Prostate gland (tissue), 2 donors: ENCODE measurements at regions of chr15 and their contacts with region 1.

Region 1: DNA sequence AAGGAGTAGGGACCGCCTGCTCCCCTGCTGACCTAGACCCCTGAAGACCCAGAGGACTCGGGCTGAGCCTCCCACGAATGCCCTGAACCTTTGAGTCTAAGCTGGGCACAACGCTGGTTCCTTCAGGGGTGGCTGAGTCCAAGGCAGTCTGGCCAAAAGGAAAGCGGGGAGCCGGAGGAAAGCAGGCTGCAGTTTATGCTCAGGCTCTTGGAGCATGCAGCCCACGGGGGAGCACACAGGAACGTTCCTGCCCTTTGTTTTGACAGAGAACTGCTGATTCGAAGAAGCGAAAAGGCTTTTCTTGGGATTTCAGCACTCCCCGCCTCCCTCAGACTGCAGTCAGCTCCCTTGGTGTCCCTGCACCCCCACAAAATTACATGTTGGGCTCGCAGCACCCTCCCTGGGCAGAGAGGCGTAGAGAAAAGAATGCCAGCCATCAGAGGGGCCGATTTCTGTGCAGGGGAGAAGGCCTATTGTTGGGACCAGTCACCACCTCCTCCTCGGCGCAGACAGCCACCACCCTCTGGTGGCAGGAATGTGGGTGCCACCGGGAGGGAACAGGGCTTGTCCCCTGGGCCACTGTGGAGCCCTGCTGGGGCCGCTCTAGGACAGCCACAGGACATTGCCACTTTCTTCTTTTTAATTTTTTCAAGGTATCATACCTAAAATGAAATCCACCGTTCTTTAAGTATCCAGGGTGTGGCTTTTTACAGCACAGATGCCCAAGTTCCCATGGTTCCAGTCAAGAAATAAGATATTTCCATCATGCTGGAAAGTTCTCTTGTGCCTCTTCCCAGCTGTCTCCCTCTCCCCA is 72.2 kb downstream of the SMAD6 start:
- DNase-seq: peak; percentile 84
- H3K4me3 ChIP-seq: no peak overlapping the region
- H3K27ac ChIP-seq: peak overlapping the region; percentile 60 to 77
- H3K4me1 ChIP-seq: peaks cover 16% of the 10 kb centered on the region
- H3K27me3 ChIP-seq: no peaks in the 10 kb centered on the region
- CTCF ChIP-seq: peak; percentile 80 to 99 (median 96)
- POLR2A ChIP-seq: no peak

Region 2: DNA sequence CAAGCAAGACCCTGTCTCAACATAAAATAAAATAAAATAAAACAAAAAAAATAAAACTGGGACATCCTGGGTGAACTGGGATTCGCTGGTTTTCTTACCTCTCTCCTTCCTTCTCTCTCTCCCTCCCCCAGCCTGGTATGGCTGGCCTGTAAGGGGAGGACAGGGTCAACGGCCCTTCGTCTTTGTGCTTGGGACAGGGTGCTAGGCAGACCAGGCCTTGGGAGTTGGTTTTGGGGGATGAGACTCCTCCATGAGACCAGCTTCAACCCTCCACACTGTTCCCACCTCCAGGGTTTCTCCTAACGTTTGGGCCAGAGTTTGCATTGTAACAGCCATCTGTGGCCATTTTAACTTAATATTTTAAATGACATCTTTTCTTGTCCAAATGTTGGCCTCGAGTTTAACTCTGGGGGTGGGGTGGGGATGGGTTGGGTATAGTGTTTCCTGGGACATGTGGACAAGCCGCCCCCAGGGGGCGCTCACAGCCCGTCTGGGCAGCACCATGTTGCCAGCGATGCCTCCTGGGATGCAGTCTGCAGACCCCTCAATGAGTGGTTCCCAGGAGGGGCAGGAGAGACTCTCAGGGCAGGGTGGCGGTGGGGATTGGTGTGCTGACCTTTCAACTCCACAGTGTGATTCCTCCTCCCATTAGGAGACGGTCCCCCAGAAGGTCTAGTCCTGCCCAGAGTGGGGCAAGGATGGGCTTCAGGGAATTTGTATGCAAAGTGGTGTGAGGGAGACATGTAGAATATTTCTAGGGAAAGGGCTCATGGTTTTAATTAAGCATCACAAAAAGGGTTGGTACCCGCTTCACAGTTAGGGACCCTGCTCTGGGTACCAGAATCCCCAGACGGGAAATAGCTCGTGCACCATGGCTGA is 170.7 kb before region 1 on chr15:
- intact Hi-C with region 1: loop called (anchors 5 kb)
- DNase-seq: peak; percentile 42
- H3K4me3 ChIP-seq: no peak overlapping the region
- H3K27ac ChIP-seq: no peak overlapping the region
- H3K4me1 ChIP-seq: no peaks in the 10 kb centered on the region
- H3K27me3 ChIP-seq: no peaks in the 10 kb centered on the region
- CTCF ChIP-seq: peak; percentile 86 to 96 (median 90)
- POLR2A ChIP-seq: no peak

Region 3: DNA sequence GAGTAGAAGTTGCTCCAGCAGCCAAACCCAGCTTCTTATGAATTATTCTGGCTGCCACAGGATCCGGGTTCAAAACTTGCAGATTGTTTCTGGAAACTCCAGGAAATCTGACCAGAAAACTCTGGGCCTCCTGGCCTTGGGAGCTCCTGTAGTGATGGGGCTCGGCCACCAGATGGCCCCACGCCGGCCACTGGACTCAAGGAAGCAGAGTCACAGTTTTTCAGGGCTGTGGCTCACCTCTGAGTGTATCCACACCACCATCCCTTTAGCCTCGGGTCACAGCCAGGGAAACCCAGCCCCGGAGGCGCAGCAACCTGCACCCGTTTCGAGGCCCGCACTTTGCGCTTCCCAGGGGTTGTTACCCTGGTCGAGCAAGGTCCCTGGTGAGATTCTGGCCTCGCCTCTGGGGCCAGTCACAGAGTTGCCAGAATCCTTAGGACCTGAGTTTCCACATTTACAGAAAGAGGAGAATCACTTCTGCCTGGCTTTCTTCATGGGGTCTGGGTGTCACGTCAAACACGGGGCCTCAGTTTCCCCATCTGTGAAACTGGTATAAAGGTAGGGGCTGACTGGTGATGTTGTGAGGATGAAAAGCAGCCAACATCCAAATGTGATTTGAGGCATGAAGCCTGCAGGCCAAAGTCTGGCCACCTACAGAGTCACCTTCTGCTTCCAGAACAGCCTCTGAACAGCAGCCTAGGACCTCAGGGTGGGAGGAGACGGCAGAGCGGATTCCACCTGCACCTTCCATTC is 154.9 kb before region 1 on chr15:
- intact Hi-C with region 1: loop called (anchors 5 kb)
- DNase-seq: peak; percentile 68
- H3K4me3 ChIP-seq: no peak overlapping the region
- H3K27ac ChIP-seq: peak overlapping the region; percentile 24 to 39
- H3K4me1 ChIP-seq: peaks cover 13% of the 10 kb centered on the region
- H3K27me3 ChIP-seq: no peaks in the 10 kb centered on the region
- CTCF ChIP-seq: peak; percentile 64 to 90 (median 82)
- POLR2A ChIP-seq: no peak

Region 4: DNA sequence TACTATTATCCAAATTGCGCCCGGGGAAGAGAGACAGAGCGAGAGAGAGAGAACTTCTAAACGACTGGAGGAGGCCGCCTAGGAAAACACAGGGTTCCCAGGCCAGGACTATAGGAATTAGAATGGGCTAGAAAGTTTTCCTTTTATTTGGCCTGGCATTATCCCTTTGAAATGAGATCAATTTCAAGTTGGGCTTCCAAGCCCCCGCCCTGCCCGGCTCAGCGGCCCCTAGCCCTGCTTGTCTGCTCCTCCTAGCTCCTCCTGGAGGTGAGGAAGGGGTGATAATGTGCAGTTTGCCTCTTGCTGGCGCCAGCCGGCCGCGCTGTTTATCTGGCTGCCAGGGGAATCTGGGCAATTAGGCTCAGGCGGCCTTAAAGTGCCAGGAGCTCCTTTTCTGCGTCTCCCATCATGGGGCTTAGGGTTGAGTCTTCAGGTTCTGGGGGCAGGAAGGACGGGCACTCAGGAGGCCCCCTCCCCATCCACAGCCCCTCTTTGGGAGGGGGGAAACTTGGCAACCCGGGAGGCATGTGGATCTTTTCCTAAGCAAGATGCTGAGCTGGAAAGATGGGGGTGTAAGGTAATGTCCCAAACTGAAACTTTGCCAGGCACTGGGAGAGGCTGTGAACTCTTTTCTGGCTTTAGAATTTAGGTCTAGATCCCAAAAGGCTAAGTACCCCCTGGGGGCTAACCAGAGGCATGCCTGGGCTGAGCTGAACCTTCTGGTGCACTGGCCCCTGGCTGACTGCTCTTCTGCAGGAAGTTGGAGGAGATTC is 66.7 kb before region 1 on chr15:
- intact Hi-C with region 1: loop called (anchors 2 kb)
- DNase-seq: peak; percentile 46
- H3K4me3 ChIP-seq: no peak overlapping the region
- H3K27ac ChIP-seq: peak overlapping the region; percentile 11 to 30
- H3K4me1 ChIP-seq: no peaks in the 10 kb centered on the region
- H3K27me3 ChIP-seq: no peaks in the 10 kb centered on the region
- CTCF ChIP-seq: peak in 2 of 4 experiments; percentile 20 to 39
- POLR2A ChIP-seq: no peak

Region 5: GRCh38 chr15:66851226-66852071 is 77.2 kb after region 1 on chr15:
- intact Hi-C with region 1: loop called (anchors 5 kb)
- DNase-seq: peak; percentile 73
- H3K4me3 ChIP-seq: no peak overlapping the region
- H3K27ac ChIP-seq: peak overlapping the region; percentile 45 to 55
- H3K4me1 ChIP-seq: peaks cover 2% of the 10 kb centered on the region
- H3K27me3 ChIP-seq: no peaks in the 10 kb centered on the region
- CTCF ChIP-seq: peak; percentile 88 to 98 (median 94)
- POLR2A ChIP-seq: no peak

Region 6: GRCh38 chr15:66946578-66947164 is 172.5 kb after region 1 on chr15:
- intact Hi-C with region 1: no loop called
- DNase-seq: peak; percentile 60
- H3K4me3 ChIP-seq: no peak overlapping the region
- H3K27ac ChIP-seq: no peak overlapping the region
- H3K4me1 ChIP-seq: no peaks in the 10 kb centered on the region
- H3K27me3 ChIP-seq: no peaks in the 10 kb centered on the region
- CTCF ChIP-seq: peak; percentile 86 to 95 (median 92)
- POLR2A ChIP-seq: no peak

Region 7: DNA sequence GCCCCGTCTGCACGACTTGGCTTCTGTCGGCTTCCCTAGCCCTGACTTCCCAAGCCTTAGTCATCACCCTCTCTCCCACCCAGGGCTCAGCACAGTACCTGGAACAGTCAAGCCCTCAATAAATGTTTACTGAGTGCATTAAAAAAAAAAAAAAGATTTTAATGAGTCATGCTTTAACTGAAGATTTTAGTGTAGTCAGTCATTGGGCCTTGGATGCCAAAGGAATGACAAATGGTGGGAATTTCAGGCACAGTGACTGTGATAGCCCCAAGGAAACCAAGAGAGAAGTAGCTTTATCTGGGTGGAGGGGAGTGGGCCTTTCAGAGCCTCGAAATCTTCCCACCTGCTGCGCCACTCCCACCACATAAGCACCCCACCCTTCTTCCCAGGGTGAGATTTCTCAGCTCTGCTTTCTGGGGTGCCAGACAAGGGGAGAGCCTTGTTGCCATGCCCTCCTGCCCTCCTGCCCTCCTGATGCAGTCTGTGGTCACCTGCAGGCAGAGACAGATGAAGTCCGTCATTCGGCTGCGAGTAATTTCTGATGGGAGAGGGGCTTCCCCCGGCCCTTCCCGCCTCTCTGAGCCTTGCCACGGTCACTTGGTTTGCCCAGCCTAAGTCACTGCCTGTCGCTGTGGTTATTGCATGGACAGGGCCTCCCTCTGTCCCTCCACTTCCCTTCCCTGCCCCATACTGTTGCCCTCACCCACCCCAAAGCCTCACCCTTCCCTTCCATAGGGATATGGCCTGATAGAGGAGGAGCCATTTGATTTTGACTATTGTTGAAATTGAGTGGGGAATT is 333.0 kb after region 1 on chr15:
- intact Hi-C with region 1: no loop called
- DNase-seq: peak; percentile 71
- H3K4me3 ChIP-seq: no peak overlapping the region
- H3K27ac ChIP-seq: peak overlapping the region; percentile 30 to 56
- H3K4me1 ChIP-seq: peaks cover 21% of the 10 kb centered on the region
- H3K27me3 ChIP-seq: no peaks in the 10 kb centered on the region
- CTCF ChIP-seq: no peak
- POLR2A ChIP-seq: no peak